ENCODE measurements at regions of chr10 and their contacts with region 1.

Region 1: GRCh38 chr10:32958085-32959005 is at the start of gene ITGB1:
- DNase-seq: peak; percentile 97
- H3K4me3 ChIP-seq: peak within 1 kb of the TSS; percentile 91 to 95 (median 95)
- H3K27ac ChIP-seq: peak within 1 kb of the TSS; percentile 97
- H3K4me1 ChIP-seq: peaks cover 40% of the 10 kb centered on the region
- H3K27me3 ChIP-seq: no peaks in the 10 kb centered on the region
- CTCF ChIP-seq: no peak
- total RNA-seq, gene ITGB1: 1,296 to 1,718 TPM

Region 2: DNA sequence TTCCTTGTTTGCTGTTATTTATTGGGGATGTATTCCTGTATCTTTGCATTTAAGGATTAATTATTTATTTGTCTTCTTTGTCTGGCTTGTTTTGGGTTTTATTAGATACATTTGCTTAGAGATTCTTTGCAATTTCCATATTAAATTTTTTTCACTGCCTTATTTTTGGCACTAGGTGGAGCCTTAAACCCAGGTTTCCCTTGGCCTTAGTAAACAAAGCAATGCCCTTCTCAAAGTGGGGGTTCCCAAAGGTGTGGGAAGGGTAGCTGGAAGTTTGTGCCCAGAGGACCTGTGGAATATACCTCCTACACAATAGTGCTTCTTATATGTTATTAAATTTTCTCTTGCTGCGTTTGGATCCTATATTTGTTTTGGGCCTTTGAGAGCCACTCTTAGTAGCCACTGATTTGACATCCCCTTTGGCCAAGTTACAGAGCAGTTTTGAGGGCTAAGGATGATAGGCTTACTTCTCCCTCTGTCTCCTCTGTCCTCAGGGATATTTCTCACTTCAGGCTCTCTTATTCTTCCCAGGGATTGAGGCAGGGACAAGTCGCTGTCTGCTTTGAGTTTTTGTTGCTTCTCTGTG is 162.7 kb before region 1 on chr10:
- CTCF ChIA-PET with region 1: no interaction called
- dilution Hi-C with region 1: no loop called
- in situ Hi-C with region 1: no loop called
- intact Hi-C with region 1: loop called (anchors 5 kb)
- DNase-seq: peak; percentile 17
- H3K4me3 ChIP-seq: no peak overlapping the region
- H3K27ac ChIP-seq: no peak overlapping the region
- H3K4me1 ChIP-seq: no peaks in the 10 kb centered on the region
- H3K27me3 ChIP-seq: no peaks in the 10 kb centered on the region
- CTCF ChIP-seq: peak; percentile 61 to 71

Region 3: DNA sequence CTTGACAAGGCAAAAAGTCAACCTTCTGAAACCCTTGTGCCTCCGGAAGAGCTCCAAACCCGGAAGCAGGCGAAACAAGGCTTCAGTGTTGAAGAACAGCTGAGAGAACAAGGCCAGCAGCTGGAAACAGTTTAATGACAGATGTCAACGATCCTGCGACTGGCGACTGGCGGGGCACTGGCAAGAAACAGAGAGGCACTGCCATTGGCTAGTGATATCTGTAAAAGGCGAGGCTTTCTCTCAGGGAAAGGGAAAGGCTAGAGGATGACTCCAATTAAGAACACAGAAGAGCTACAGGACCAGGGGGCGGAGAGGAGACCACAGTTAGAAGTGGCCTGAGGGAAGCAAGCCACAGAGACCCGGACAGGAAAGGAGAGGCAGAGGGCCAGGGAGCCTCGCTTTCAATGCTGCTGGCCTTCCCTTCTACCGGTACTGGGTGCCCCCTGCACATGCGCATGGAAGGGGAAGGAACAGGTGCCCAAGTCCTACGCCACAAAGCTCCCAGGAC is 19.7 kb before region 1 on chr10:
- CTCF ChIA-PET with region 1: no interaction called
- dilution Hi-C with region 1: no loop called
- in situ Hi-C with region 1: no loop called
- intact Hi-C with region 1: loop called (anchors 2 kb)
- DNase-seq: peak; percentile 37
- H3K4me3 ChIP-seq: peak overlapping the region in 2 of 3 experiments; percentile 3 to 12
- H3K27ac ChIP-seq: peak overlapping the region; percentile 17
- H3K4me1 ChIP-seq: peaks cover 56% of the 10 kb centered on the region
- H3K27me3 ChIP-seq: no peaks in the 10 kb centered on the region
- CTCF ChIP-seq: no peak

Region 4: GRCh38 chr10:32980558-32981468 is 22.5 kb after region 1 on chr10:
- CTCF ChIA-PET with region 1: no interaction called
- dilution Hi-C with region 1: no loop called
- in situ Hi-C with region 1: no loop called
- intact Hi-C with region 1: loop called (anchors 1 kb)
- DNase-seq: peak; percentile 100
- H3K4me3 ChIP-seq: peak overlapping the region; percentile 24 to 51 (median 45)
- H3K27ac ChIP-seq: peak overlapping the region; percentile 99
- H3K4me1 ChIP-seq: peaks cover 51% of the 10 kb centered on the region
- H3K27me3 ChIP-seq: no peaks in the 10 kb centered on the region
- CTCF ChIP-seq: no peak

Region 5: DNA sequence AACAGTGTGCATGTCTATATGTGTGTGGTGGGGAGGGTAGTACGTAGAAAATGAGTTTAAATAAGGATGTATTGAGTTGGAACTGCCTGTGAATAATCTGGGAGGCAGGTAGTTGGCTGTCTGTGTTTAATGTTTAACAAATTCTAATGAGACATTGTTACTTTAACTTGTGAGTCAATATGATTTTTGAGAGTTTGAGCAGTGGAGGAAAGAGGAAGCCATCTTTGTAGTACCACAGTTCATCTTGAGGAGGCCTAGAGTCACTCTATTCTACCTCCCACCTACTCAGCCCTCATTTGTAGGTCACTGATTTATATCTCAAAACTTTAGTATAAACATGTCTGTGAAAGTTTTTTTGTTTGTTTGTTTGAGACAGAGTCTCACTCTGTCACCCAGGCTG is 129.6 kb after region 1 on chr10:
- CTCF ChIA-PET with region 1: interaction called, 10 read pairs
- dilution Hi-C with region 1: no loop called
- in situ Hi-C with region 1: no loop called
- intact Hi-C with region 1: no loop called
- DNase-seq: no peak
- H3K4me3 ChIP-seq: no peak overlapping the region
- H3K27ac ChIP-seq: no peak overlapping the region
- H3K4me1 ChIP-seq: no peaks in the 10 kb centered on the region
- H3K27me3 ChIP-seq: no peaks in the 10 kb centered on the region
- CTCF ChIP-seq: no peak

Region 6: GRCh38 chr10:33134011-33134751 is 175.8 kb after region 1 on chr10:
- CTCF ChIA-PET with region 1: no interaction called
- dilution Hi-C with region 1: no loop called
- in situ Hi-C with region 1: no loop called
- intact Hi-C with region 1: loop called (anchors 5 kb)
- DNase-seq: peak; percentile 100
- H3K4me3 ChIP-seq: no peak overlapping the region
- H3K27ac ChIP-seq: peak overlapping the region; percentile 96
- H3K4me1 ChIP-seq: peaks cover 77% of the 10 kb centered on the region
- H3K27me3 ChIP-seq: no peaks in the 10 kb centered on the region
- CTCF ChIP-seq: no peak

Region 7: GRCh38 chr10:33155720-33156638 is 197.6 kb after region 1 on chr10:
- CTCF ChIA-PET with region 1: no interaction called
- dilution Hi-C with region 1: no loop called
- in situ Hi-C with region 1: no loop called
- intact Hi-C with region 1: loop called (anchors 5 kb)
- DNase-seq: peak; percentile 75
- H3K4me3 ChIP-seq: no peak overlapping the region
- H3K27ac ChIP-seq: peak overlapping the region; percentile 4
- H3K4me1 ChIP-seq: peaks cover 21% of the 10 kb centered on the region
- H3K27me3 ChIP-seq: no peaks in the 10 kb centered on the region
- CTCF ChIP-seq: peak; percentile 86 to 94

Region 8: GRCh38 chr10:33314811-33315561 is 356.6 kb after region 1 on chr10:
- CTCF ChIA-PET with region 1: no interaction called
- dilution Hi-C with region 1: no loop called
- in situ Hi-C with region 1: no loop called
- intact Hi-C with region 1: no loop called
- DNase-seq: no peak
- H3K4me3 ChIP-seq: no peak overlapping the region
- H3K27ac ChIP-seq: no peak overlapping the region
- H3K4me1 ChIP-seq: peaks cover 15% of the 10 kb centered on the region
- H3K27me3 ChIP-seq: no peaks in the 10 kb centered on the region
- CTCF ChIP-seq: no peak

Measured in mammary epithelial cell (primary cell).